Heart right ventricle (tissue), 16 donors: ENCODE measurements at regions of chr17 and their contacts with region 1.

Region 1: GRCh38 chr17:33486135-33486885 is 193.2 kb upstream of the ASIC2 start:
- DNase-seq: no peak
- ATAC-seq: no peak
- H3K4me3 ChIP-seq: no peak overlapping the region
- H3K27ac ChIP-seq: no peak overlapping the region
- H3K4me1 ChIP-seq: no peaks in the 10 kb centered on the region
- H3K27me3 ChIP-seq: peaks cover 0 to 3% (median 0%) of the 10 kb centered on the region in 7 donors
- CTCF ChIP-seq: no peak

Region 2: GRCh38 chr17:33416131-33416530 is 70.2 kb before region 1 on chr17:
- intact Hi-C with region 1: loop called in 1 of 10 experiments (anchors 10 kb)
- DNase-seq: no peak
- ATAC-seq: no peak
- H3K4me3 ChIP-seq: no peak overlapping the region
- H3K27ac ChIP-seq: no peak overlapping the region
- H3K4me1 ChIP-seq: no peaks in the 10 kb centered on the region
- H3K27me3 ChIP-seq: peaks cover 0 to 16% (median 0%) of the 10 kb centered on the region in 7 donors
- CTCF ChIP-seq: no peak